ENCODE measurements at regions of chr16 and their contacts with region 1.

Region 1: DNA sequence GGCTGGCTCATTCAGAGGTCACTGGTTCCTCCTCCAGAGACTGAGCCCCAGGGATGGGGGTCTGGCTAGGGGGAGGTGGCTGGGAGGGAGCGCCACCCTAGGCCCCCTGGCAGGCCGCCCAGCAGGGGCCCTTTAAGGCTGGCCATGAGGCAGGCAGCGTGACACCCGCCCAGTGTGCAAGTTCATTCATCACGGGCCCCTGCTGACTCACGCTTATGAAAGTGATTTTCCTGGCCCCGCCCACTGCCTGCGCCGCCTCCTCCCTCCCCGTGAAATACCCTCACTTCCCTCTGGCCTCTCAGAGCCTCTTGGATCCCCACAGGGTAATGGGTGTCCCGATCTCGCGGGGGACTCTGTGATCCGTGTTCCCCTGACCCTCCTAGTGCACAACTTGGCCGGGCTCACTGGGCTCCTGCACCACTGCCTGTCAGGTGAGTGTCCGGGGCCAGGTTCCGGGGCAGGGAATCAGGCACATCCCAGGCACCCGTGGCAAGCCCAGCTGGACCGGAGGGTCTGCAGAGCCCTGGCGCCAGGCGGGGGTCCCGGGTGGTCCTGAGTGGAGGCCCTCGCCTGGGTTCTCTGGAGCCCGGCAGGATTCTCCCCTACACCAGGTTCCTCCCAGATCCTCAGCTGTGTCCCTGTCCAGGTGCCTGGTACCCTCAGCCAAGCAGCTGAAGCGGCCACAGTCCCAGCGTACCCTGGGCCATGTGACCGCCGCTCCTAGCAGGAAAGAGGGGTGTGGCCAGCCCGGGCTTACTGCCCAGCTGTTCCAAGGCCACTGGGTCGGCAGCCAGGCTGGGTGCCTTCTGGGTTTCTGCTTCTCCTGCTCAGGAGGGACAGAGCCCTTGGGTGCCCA is at the start of gene OSGIN1:
- DNase-seq: peak; percentile 95
- ATAC-seq: peak; percentile 87
- H3K4me3 ChIP-seq: peak within 1 kb of the TSS; percentile 80 to 90 (median 83)
- H3K27ac ChIP-seq: peak within 1 kb of the TSS; percentile 94
- H3K4me1 ChIP-seq: peaks cover 74% of the 10 kb centered on the region
- H3K27me3 ChIP-seq: no peaks in the 10 kb centered on the region; a peak in 1 of 5 replicates
- CTCF ChIP-seq: 0 out of 2 replicates have a peak, but pooled peaks have one; percentile 1
- EP300 ChIP-seq: peak; percentile 81 to 85
- POLR2A ChIP-seq: peak; percentile 95 to 96
- RAD21 ChIP-seq: peak; percentile 62; the same call in 1 of the 2 replicates
- total RNA-seq, gene OSGIN1: 18.1 and 27.1 TPM in 2 replicates

Region 2: DNA sequence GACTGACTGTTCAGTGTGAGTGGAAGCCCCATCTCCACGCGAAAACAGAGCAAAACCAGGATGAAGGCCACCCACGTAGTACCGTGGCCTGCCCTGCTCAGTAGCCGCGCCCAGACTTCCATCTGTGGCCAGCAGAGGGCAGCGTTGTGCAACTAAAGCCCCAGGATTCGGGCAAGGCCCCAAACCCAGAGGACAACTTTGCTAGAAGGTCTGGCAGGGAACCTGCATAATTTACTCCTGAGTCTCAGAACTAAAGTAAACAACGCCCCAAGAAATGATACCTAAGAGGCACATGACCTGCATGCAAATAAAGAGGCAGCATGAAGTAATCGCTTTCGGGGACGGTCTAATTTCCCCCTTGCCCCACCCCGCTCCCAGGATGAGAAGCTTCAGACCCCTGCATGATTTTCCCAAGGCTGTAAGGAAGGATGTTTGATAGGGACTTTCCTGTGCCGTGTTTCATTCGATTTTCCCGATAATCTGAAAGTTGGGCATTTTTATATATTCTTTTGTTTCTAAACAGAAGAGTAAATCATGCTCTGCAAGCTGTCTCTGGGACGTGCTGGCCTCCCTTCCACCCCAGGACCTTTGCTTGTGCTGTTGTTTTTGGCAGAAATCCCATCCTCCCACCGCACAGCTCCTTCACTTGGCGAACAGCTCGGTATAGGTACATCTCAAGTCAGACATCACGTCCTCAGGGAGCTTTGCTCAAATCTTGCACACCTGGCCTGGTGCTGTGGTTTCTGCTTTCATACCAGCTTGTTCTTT is 126.8 kb before region 1 on chr16:
- CTCF ChIA-PET with region 1: no interaction called
- POLR2A ChIA-PET with region 1: interaction called, 3 read pairs
- in situ Hi-C with region 1: no loop called
- intact Hi-C with region 1: loop called (anchors 10 kb)
- DNase-seq: peak; percentile 52
- ATAC-seq: peak; percentile 92
- H3K4me3 ChIP-seq: peak overlapping the region in 1 of 3 experiments; percentile 3; a peak in 1 of 6 replicates
- H3K27ac ChIP-seq: no peak overlapping the region
- H3K4me1 ChIP-seq: no peaks in the 10 kb centered on the region
- H3K27me3 ChIP-seq: peaks cover 4 to 59% of the 10 kb centered on the region in 2 experiments; a peak in 3 of 5 replicates
- CTCF ChIP-seq: peak; percentile 97
- EP300 ChIP-seq: no peak
- POLR2A ChIP-seq: no peak
- RAD21 ChIP-seq: peak; percentile 91

Region 3: DNA sequence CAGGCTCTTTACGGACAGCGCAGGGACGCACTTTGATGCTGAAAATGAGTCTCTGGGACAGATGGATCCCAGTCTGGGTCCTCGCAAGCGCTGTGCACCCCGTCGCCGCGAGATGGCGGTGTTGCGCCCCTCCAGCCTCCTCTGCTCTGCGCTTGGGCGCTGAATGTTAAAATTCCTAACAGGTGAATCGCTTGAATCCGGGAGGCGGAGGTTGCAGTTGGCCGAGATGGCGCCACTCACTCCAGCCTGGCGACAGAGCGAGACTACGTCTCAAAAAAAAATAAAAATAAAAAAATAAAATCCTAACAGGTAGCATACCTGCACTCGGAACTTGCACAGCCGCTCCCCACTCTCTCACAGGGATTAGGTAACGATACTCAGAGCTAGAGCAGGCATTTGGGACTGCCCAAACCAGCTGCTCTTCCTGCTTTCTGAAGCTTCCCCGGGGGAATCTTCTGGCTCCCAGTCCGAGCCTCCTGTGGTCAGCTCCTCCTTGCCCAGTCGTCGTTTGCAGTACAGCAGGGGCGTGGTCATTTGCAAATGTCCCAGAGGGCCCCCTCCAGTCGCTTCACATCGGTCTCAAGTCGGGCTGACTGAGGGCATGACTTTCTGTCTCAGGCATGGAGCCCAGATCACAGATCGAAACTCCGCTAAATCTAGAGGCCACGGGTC is 26.3 kb before region 1 on chr16:
- CTCF ChIA-PET with region 1: interaction called, 31 read pairs
- POLR2A ChIA-PET with region 1: interaction called, 46 read pairs
- in situ Hi-C with region 1: no loop called
- intact Hi-C with region 1: loop called (anchors 1 kb)
- DNase-seq: peak; percentile 82
- ATAC-seq: peak; percentile 83
- H3K4me3 ChIP-seq: peak overlapping the region; percentile 20 to 69 (median 47)
- H3K27ac ChIP-seq: no peak overlapping the region
- H3K4me1 ChIP-seq: peaks cover 43% of the 10 kb centered on the region
- H3K27me3 ChIP-seq: peaks cover 3 to 21% of the 10 kb centered on the region in 2 experiments; a peak in 4 of 5 replicates
- CTCF ChIP-seq: peak; percentile 97
- EP300 ChIP-seq: peak in 1 of 2 experiments; percentile 68; a peak in 1 of 4 replicates
- POLR2A ChIP-seq: no peak
- RAD21 ChIP-seq: peak; percentile 97

Region 4: DNA sequence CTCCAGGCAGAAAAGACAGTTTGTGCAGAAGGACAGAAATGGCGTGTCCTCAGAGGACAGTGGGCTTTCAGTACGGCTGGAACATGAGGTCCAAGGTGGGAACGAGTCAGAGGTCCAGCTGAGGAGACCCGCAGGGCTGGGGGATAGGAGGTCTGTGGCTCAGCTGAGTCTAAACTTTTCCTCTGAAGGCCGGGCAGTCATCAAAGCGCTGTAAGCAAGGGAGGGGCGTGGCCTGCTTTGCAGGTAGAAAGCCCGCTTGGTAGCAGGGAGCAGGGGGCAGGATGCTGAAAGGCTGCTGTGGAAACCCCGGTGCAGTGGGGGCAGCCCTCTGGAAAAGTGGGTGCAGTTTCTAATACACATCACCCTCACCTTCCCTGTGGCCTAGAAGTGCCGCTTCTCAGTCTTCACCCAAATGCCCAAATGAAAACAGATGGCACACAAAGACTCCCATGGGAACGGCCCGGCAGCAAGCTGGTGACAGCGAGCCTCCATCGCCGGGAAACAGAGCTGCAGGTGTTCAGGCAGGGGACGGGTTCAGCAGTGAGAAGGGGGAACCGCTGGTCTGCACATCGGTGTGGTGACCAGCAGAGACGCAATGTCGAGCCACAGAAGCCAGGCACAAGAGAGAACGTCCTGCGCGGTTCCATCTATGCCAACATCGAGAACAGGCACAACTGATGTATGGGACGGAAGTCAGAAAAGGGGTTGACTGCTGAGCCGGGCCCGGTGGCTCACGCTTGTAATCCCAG is 12.4 kb before region 1 on chr16:
- CTCF ChIA-PET with region 1: no interaction called
- POLR2A ChIA-PET with region 1: interaction called, 58 read pairs
- in situ Hi-C with region 1: no loop called
- intact Hi-C with region 1: loop called (anchors 1 kb)
- DNase-seq: no peak
- ATAC-seq: no peak
- H3K4me3 ChIP-seq: peak overlapping the region in 1 of 3 experiments; percentile 9; a peak in 1 of 6 replicates
- H3K27ac ChIP-seq: no peak overlapping the region
- H3K4me1 ChIP-seq: peaks cover 84% of the 10 kb centered on the region
- H3K27me3 ChIP-seq: peaks cover 6 to 38% of the 10 kb centered on the region in 2 experiments; a peak in 3 of 5 replicates
- CTCF ChIP-seq: no peak
- EP300 ChIP-seq: no peak
- POLR2A ChIP-seq: no peak
- RAD21 ChIP-seq: no peak

Region 5: GRCh38 chr16:84013787-84014569 is 60.8 kb after region 1 on chr16:
- CTCF ChIA-PET with region 1: no interaction called
- POLR2A ChIA-PET with region 1: interaction called, 15 read pairs
- in situ Hi-C with region 1: no loop called
- intact Hi-C with region 1: no loop called
- DNase-seq: peak; percentile 94
- ATAC-seq: peak; percentile 92
- H3K4me3 ChIP-seq: peak overlapping the region in 1 of 3 experiments; percentile 6; a peak in 1 of 6 replicates
- H3K27ac ChIP-seq: no peak overlapping the region
- H3K4me1 ChIP-seq: peaks cover 8% of the 10 kb centered on the region; the same call in 1 of the 2 replicates
- H3K27me3 ChIP-seq: peaks cover 0 to 13% of the 10 kb centered on the region in 2 experiments; a peak in 2 of 5 replicates
- CTCF ChIP-seq: peak; percentile 16; the same call in 1 of the 2 replicates
- EP300 ChIP-seq: no peak
- POLR2A ChIP-seq: no peak
- RAD21 ChIP-seq: no peak

Region 6: DNA sequence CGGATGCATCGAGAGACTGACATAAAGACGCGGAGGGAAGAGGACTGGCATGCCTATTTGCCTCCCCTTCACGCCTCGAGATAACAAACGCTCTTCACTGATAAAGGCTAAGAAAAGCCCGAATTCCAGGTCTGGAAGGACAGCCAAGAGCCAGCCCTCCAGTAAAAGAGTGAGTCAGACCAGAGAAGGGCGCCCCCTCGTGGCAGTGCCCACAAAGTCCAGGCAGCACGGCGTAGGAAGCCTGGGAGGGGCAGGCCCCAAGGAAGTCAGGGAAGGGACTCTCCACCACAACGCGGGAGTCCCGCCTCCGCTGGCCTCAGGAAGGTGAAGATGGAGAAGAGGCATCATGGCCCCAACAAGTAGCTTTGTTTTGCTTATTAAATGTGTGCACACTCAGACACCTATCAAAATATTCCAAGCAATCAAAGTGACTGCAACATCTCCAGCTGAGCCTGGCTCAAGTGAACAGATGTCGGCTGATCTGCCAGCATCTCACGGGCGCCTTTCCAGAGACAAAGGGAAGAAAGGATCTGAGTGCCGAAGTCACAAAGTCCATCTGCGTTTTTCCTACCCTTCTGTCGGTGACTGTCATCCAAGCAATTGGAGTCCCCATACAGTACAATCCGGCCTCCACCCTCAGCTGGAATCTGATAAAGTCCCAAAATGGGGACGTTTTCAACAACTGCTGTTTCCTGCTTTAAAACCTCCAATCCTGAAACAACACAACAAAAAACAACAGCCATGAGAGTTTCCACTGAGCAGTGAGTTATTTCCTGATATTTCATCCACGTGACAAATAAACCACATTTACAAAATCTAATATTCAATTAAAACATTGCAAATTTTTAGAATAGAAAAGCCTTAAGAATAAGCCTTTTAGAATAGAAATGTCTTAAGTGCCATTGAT is 109.8 kb after region 1 on chr16:
- CTCF ChIA-PET with region 1: interaction called, 53 read pairs
- POLR2A ChIA-PET with region 1: no interaction called
- in situ Hi-C with region 1: no loop called
- intact Hi-C with region 1: loop called (anchors 1 kb)
- DNase-seq: peak; percentile 59
- ATAC-seq: peak; percentile 97
- H3K4me3 ChIP-seq: no peak overlapping the region
- H3K27ac ChIP-seq: no peak overlapping the region
- H3K4me1 ChIP-seq: no peaks in the 10 kb centered on the region
- H3K27me3 ChIP-seq: no peaks in the 10 kb centered on the region
- CTCF ChIP-seq: peak; percentile 95
- EP300 ChIP-seq: no peak
- POLR2A ChIP-seq: no peak
- RAD21 ChIP-seq: peak; percentile 72

Region 7: GRCh38 chr16:84175350-84176081 is 222.3 kb after region 1 on chr16:
- CTCF ChIA-PET with region 1: no interaction called
- POLR2A ChIA-PET with region 1: interaction called, 3 read pairs
- in situ Hi-C with region 1: loop called (anchors 25 kb)
- intact Hi-C with region 1: loop called (anchors 5 kb)
- DNase-seq: peak; percentile 65
- ATAC-seq: peak; percentile 80
- H3K4me3 ChIP-seq: peak overlapping the region in 1 of 3 experiments; percentile 61; a peak in 1 of 6 replicates
- H3K27ac ChIP-seq: no peak overlapping the region
- H3K4me1 ChIP-seq: peaks cover 37% of the 10 kb centered on the region
- H3K27me3 ChIP-seq: peaks cover 1 to 6% of the 10 kb centered on the region in 2 experiments; a peak in 3 of 5 replicates
- CTCF ChIP-seq: peak; percentile 94
- EP300 ChIP-seq: no peak
- POLR2A ChIP-seq: no peak
- RAD21 ChIP-seq: peak; percentile 79